Endothelial cell of umbilical vein (primary cell): ENCODE measurements at regions of chr12 and their contacts with region 1.

Region 1: GRCh38 chr12:45789025-45789424 is 59.5 kb downstream of the ARID2 start:
- DNase-seq: no peak
- H3K4me3 ChIP-seq: no peak overlapping the region
- H3K27ac ChIP-seq: no peak overlapping the region
- H3K4me1 ChIP-seq: no peaks in the 10 kb centered on the region
- H3K27me3 ChIP-seq: no peaks in the 10 kb centered on the region
- CTCF ChIP-seq: no peak
- POLR2A ChIP-seq: no peak

Region 2: GRCh38 chr12:45803652-45804594 is 14.9 kb after region 1 on chr12:
- CTCF ChIA-PET with region 1: interaction called, 15 read pairs
- POLR2A ChIA-PET with region 1: no interaction called
- dilution Hi-C with region 1: no loop called
- intact Hi-C with region 1: no loop called
- DNase-seq: no peak
- H3K4me3 ChIP-seq: no peak overlapping the region
- H3K27ac ChIP-seq: no peak overlapping the region
- H3K4me1 ChIP-seq: no peaks in the 10 kb centered on the region
- H3K27me3 ChIP-seq: no peaks in the 10 kb centered on the region
- CTCF ChIP-seq: no peak
- POLR2A ChIP-seq: no peak

Region 3: GRCh38 chr12:45944771-45945170 is 155.7 kb after region 1 on chr12:
- CTCF ChIA-PET with region 1: no interaction called
- POLR2A ChIA-PET with region 1: no interaction called
- dilution Hi-C with region 1: no loop called
- intact Hi-C with region 1: no loop called
- DNase-seq: no peak
- H3K4me3 ChIP-seq: no peak overlapping the region
- H3K27ac ChIP-seq: no peak overlapping the region
- H3K4me1 ChIP-seq: no peaks in the 10 kb centered on the region
- H3K27me3 ChIP-seq: no peaks in the 10 kb centered on the region
- CTCF ChIP-seq: no peak
- POLR2A ChIP-seq: no peak